Endothelial cell of umbilical vein (primary cell): ENCODE measurements at regions of chr3 and their contacts with region 1.

Region 1: DNA sequence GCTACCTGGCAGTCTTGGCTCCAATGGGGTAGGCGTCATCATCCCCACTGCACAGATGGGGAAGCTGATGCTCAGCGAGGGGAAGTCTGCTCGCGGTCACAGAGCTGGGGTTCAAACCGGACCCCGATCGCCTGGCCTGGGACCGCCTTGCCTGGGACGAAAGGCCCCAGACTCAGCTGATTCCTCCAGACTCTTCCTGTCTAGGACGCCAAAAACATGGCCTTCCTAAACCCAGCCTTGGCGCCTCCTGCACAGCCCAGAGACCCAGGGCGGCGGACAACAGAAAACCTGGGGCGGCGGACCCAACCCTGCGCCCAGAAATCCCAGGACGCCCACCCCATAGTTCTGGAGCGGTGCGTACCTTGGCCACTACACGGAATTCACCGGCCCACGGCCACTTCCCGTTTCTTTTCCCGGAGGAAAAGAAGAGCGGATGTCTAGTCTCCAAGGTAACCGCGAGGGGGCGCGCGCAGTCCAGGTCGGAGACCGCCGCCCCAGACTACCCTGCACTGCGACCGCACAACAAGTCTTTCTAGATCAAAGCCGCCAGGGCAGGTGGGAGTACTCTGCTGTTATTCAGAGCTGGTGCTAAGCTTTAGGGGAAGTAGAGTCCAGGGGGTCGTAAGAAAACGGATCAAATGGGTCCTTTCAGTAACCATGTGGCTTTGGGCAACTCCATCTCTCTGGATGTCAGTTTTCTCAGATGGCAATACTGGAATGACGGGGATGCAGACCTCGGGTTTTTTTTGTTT is 4.9 kb upstream of the IL17RD start:
- DNase-seq: peak; percentile 67
- H3K4me3 ChIP-seq: peak overlapping the region; percentile 39 to 59 (median 52)
- H3K27ac ChIP-seq: no peak overlapping the region
- H3K4me1 ChIP-seq: no peaks in the 10 kb centered on the region
- H3K27me3 ChIP-seq: peaks cover 31 to 34% of the 10 kb centered on the region in 2 experiments
- CTCF ChIP-seq: peak; percentile 84 to 86
- POLR2A ChIP-seq: no peak

Region 2: GRCh38 chr3:56915966-56916586 is 254.0 kb before region 1 on chr3:
- CTCF ChIA-PET with region 1: no interaction called
- POLR2A ChIA-PET with region 1: no interaction called
- dilution Hi-C with region 1: no loop called
- intact Hi-C with region 1: no loop called
- DNase-seq: no peak
- H3K4me3 ChIP-seq: no peak overlapping the region
- H3K27ac ChIP-seq: no peak overlapping the region
- H3K4me1 ChIP-seq: peaks cover 31% of the 10 kb centered on the region
- H3K27me3 ChIP-seq: no peaks in the 10 kb centered on the region
- CTCF ChIP-seq: no peak
- POLR2A ChIP-seq: no peak

Region 3: DNA sequence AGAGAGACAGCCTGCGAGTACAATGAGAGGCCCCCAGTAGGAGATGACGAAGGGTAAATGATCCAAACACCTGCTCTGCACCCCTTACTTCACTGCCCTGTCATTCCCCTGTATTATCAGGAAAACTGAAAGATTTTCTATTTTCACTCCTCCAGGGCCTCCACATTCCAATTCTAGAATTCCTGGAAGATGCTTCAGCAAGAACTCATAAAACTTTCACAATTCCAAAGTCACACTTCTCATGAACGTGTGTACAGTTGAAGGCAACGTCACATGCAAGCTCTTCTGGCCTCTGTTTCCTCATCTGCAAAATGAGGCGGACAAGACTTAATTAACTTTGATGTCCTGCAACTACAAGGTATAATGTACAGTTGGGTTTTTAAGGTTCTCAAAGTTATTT is 172.4 kb before region 1 on chr3:
- CTCF ChIA-PET with region 1: interaction called, 3 read pairs
- POLR2A ChIA-PET with region 1: no interaction called
- dilution Hi-C with region 1: no loop called
- intact Hi-C with region 1: loop called (anchors 5 kb)
- DNase-seq: no peak
- H3K4me3 ChIP-seq: no peak overlapping the region
- H3K27ac ChIP-seq: no peak overlapping the region
- H3K4me1 ChIP-seq: peaks cover 3% of the 10 kb centered on the region
- H3K27me3 ChIP-seq: no peaks in the 10 kb centered on the region
- CTCF ChIP-seq: no peak
- POLR2A ChIP-seq: no peak

Region 4: DNA sequence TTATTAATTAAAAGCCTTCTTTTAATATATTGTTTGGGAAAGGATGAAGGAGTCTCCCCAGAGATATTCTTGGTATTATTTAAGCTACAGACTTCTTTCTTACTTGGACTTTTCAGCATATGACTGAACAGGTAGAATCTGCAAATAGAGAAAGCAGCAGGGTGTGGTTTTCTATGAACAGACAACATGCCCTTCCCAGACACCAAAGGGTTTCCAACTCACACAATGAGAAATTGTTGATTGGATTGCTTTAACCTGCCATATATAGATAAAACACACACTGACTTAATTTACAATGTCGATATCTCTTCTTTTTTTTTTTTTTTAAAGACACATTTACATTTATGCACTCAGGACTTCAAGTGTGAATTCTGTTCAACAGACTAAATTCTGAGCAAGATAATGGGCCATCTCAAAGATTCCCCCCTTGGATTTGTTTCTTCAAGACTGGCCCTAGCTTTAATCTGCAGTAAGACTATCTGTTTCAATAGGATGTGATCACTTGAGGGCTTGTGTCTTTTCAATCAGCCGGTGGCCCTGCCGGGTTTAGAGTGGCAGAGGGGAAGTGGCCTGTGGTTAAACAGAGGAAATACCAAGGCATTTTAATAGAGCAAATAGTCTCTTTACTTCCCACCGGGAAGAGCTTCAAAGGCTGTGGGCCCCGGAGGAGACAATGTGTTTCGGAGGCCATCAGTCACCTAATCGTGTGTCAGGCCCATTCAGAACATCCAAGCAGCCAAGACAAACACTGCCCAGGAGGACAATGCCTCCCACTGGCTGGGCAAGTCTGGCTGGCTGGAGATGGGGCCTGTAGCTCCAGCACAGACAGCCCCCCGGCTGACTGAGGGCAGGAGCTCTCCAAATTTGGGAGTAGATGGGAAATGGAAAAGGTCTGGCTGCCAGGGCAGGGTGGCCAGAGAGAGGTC is 11.0 kb before region 1 on chr3:
- CTCF ChIA-PET with region 1: interaction called, 20 read pairs
- POLR2A ChIA-PET with region 1: no interaction called
- dilution Hi-C with region 1: no loop called
- intact Hi-C with region 1: no loop called
- DNase-seq: peak; percentile 18
- H3K4me3 ChIP-seq: no peak overlapping the region
- H3K27ac ChIP-seq: no peak overlapping the region
- H3K4me1 ChIP-seq: peaks cover 6% of the 10 kb centered on the region
- H3K27me3 ChIP-seq: peaks cover 67 to 73% of the 10 kb centered on the region in 2 experiments
- CTCF ChIP-seq: no peak
- POLR2A ChIP-seq: no peak

Region 5: GRCh38 chr3:57227204-57227929 is 57.3 kb after region 1 on chr3 and contains the start of gene APPL1:
- CTCF ChIA-PET with region 1: no interaction called
- POLR2A ChIA-PET with region 1: no interaction called
- dilution Hi-C with region 1: no loop called
- intact Hi-C with region 1: loop called (anchors 2 kb)
- DNase-seq: peak; percentile 94
- H3K4me3 ChIP-seq: peak within 1 kb of the TSS; percentile 85 to 98 (median 88)
- H3K27ac ChIP-seq: peak within 1 kb of the TSS; percentile 75
- H3K4me1 ChIP-seq: peaks cover 18% of the 10 kb centered on the region
- H3K27me3 ChIP-seq: no peaks in the 10 kb centered on the region
- CTCF ChIP-seq: no peak
- POLR2A ChIP-seq: peak; percentile 84
- total RNA-seq, gene APPL1: 28.8 and 29.7 TPM in 2 replicates

Region 6: GRCh38 chr3:57434041-57434440 is 264.0 kb after region 1 on chr3:
- CTCF ChIA-PET with region 1: no interaction called
- POLR2A ChIA-PET with region 1: no interaction called
- dilution Hi-C with region 1: no loop called
- intact Hi-C with region 1: loop called (anchors 1 kb)
- DNase-seq: peak; percentile 57
- H3K4me3 ChIP-seq: no peak overlapping the region
- H3K27ac ChIP-seq: no peak overlapping the region
- H3K4me1 ChIP-seq: no peaks in the 10 kb centered on the region
- H3K27me3 ChIP-seq: no peaks in the 10 kb centered on the region
- CTCF ChIP-seq: peak; percentile 24 to 48
- POLR2A ChIP-seq: no peak

Region 7: GRCh38 chr3:57852896-57853295 is 682.8 kb after region 1 on chr3:
- CTCF ChIA-PET with region 1: interaction called, 10 read pairs
- POLR2A ChIA-PET with region 1: no interaction called
- dilution Hi-C with region 1: no loop called
- intact Hi-C with region 1: loop called (anchors 2 kb)
- DNase-seq: peak; percentile 54
- H3K4me3 ChIP-seq: no peak overlapping the region
- H3K27ac ChIP-seq: no peak overlapping the region
- H3K4me1 ChIP-seq: no peaks in the 10 kb centered on the region
- H3K27me3 ChIP-seq: no peaks in the 10 kb centered on the region
- CTCF ChIP-seq: peak in 1 of 2 donors; percentile 6
- POLR2A ChIP-seq: no peak